Activated B cell treated with CpG ODN at 0.5 μM for 24 hours (primary cell): ENCODE measurements at regions of chr9 and their contacts with region 1.

Region 1: GRCh38 chr9:34376596-34377403 is at the start of gene MYORG:
- DNase-seq: peak; percentile 94
- ATAC-seq: peak; percentile 85
- H3K4me3 Mint-ChIP-seq: peak within 1 kb of the TSS; percentile 93
- H3K27ac Mint-ChIP-seq: peak within 1 kb of the TSS; percentile 75
- H3K4me1 Mint-ChIP-seq: peaks cover 42% of the 10 kb centered on the region
- H3K27me3 Mint-ChIP-seq: peaks cover 2% of the 10 kb centered on the region
- CTCF ChIP-seq: no peak
- total RNA-seq, gene MYORG: 0.24 and 0.27 TPM in 2 replicates

Region 2: DNA sequence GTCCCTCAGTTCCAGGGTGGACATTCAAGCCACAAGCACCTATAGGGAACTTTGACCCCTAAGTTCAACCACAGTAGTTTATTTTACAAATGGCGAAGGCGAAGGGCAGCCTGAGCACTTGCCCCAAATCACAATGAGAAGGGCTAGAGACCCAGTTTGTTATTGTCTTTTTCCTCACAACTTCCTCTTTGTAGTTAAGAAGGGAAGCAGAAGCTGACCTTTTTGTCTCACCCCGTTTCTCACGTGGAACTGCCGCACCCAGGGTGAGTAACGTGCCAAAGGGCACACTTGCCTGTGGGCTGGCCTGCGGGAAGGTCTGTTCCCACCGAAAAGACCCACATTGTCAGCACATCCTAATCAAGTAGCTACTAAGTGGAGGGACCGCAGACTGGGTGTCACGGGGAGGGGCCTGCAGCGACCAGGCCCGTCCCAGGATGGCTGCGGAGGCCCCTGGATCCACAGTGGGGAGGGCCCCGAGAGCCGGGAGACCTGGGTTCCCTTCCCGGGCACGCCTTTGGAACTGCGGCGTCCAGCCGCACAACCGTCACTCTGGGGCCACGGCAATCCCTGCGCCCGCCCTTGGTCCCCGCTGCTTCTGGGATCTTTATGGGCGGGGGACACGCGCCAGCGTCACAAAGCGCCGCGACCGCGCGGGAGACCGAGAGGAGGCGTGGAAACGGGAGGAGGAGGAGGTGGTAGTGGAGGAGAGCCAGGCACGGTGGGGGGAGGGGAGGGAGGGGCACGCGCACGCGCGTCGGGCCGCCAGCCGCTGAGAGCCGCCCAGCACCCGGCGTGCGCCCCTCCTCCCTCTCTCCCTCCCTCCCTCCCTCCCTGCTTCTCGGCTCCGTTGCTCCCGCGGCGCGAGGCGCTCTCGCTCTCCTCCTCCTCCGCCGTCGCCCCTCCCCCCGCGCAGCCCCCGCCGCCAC is 560.2 kb before region 1 on chr9 and contains the start of gene UBE2R2:
- CTCF ChIA-PET with region 1: no interaction called
- POLR2A ChIA-PET with region 1: interaction called, 5 read pairs
- intact Hi-C with region 1: loop called (anchors 1 kb)
- DNase-seq: peak; percentile 79
- ATAC-seq: peak; percentile 72
- H3K4me3 Mint-ChIP-seq: peak within 1 kb of the TSS; percentile 90
- H3K27ac Mint-ChIP-seq: peak within 1 kb of the TSS; percentile 98
- H3K4me1 Mint-ChIP-seq: peaks cover 61% of the 10 kb centered on the region
- H3K27me3 Mint-ChIP-seq: no peaks in the 10 kb centered on the region
- CTCF ChIP-seq: no peak
- total RNA-seq, gene UBE2R2: 28.5 and 28.9 TPM in 2 replicates

Region 3: DNA sequence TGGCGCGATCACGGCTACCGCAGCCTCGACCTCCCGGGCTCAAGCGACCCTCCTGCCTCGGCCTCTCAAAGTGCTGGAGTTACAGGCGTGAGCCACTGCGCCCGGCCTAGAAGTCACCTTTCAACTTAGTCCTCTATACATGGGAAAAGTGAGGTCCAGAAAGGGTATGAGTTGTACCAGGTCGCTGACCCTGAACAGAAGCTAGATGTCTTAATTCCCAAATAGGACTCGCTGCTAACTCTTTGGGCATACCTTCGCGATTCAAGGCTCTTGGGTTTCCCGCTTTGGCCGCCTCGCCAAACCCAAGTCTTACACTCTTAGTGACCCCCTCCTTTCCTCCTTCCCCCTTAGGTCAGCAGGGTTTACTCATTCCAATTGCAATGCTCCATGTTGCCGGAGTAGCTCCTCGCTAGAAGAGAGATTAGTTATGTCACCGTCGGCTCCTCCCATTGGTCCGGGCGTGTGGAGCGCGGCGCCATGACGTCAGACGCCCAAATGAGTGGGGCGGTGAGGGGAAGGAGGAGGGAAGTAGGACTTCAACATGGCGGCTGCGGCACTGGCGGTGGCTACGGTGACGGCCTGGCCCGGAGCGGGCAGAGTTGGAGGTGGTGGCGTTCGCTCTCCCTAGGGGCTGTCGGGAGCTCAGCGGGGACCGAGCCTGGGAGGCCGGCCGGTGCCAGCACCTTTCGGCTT is 198.1 kb before region 1 on chr9 and contains the start of gene UBAP1:
- CTCF ChIA-PET with region 1: no interaction called
- POLR2A ChIA-PET with region 1: no interaction called
- intact Hi-C with region 1: loop called (anchors 1 kb)
- DNase-seq: peak; percentile 88
- ATAC-seq: peak; percentile 97
- H3K4me3 Mint-ChIP-seq: peak within 1 kb of the TSS; percentile 99
- H3K27ac Mint-ChIP-seq: peak within 1 kb of the TSS; percentile 96
- H3K4me1 Mint-ChIP-seq: peaks cover 20% of the 10 kb centered on the region
- H3K27me3 Mint-ChIP-seq: no peaks in the 10 kb centered on the region
- CTCF ChIP-seq: no peak
- total RNA-seq, gene UBAP1: 28.3 and 30.6 TPM in 2 replicates

Region 4: GRCh38 chr9:34458013-34458958 is 81.5 kb after region 1 on chr9 and contains the starts of genes DNAI1 and FAM219A:
- CTCF ChIA-PET with region 1: interaction called, 4 read pairs
- POLR2A ChIA-PET with region 1: no interaction called
- intact Hi-C with region 1: loop called (anchors 1 kb)
- DNase-seq: peak; percentile 99
- ATAC-seq: peak; percentile 92
- H3K4me3 Mint-ChIP-seq: peak within 1 kb of the TSS; percentile 90
- H3K27ac Mint-ChIP-seq: peak within 1 kb of the TSS; percentile 68
- H3K4me1 Mint-ChIP-seq: peaks cover 34% of the 10 kb centered on the region
- H3K27me3 Mint-ChIP-seq: peaks cover 12% of the 10 kb centered on the region
- CTCF ChIP-seq: no peak
- total RNA-seq, gene DNAI1: not detected in 2 replicates
- total RNA-seq, gene FAM219A: 13.5 and 16.9 TPM in 2 replicates

Region 5: DNA sequence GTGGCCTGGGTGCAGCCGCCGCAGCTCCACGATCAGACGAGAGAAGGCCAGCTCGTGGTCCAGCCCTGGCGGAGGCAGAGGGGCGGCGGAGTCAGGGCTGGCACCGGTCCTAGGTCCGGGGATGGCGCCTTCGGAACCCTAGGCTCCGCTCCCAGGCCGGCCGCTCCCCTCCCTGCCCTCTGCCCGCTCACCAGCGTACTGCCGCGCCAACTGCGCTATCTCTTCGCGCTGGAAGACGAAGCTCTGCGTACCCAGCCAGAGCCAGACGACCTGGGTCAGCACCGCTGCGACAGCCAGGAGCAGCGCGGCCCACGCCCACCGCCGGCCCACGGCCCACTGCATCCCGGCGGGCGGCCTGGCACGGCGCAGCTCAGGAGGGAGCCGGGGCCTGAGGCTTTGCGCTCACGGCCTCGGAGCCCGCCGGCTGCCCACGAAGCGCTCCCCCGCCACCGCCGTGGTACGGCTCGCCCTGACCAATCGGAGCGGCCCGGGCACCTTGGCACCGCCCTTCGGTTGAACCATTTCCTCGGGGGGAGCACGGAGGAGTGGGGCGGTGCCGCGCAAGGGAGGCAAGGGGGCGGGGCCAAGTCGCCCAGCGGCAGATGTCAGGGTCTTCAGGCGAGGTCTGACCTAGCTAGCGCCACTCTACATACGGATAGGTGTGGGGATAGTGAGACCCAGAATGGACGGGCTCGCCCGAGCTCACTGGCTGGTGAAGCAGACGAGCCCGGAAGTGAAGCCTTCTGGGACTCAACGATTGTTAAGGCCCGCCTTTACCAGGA is 260.7 kb after region 1 on chr9 and contains the start of gene SIGMAR1:
- CTCF ChIA-PET with region 1: interaction called, 5 read pairs
- POLR2A ChIA-PET with region 1: interaction called, 5 read pairs
- intact Hi-C with region 1: loop called (anchors 1 kb)
- DNase-seq: peak; percentile 93
- ATAC-seq: peak; percentile 95
- H3K4me3 Mint-ChIP-seq: peak within 1 kb of the TSS; percentile 87
- H3K27ac Mint-ChIP-seq: peak within 1 kb of the TSS; percentile 78
- H3K4me1 Mint-ChIP-seq: peaks cover 29% of the 10 kb centered on the region
- H3K27me3 Mint-ChIP-seq: no peaks in the 10 kb centered on the region
- CTCF ChIP-seq: no peak
- total RNA-seq, gene SIGMAR1: 27.2 TPM in 2 replicates

Region 6: GRCh38 chr9:34777666-34778065 is 400.9 kb after region 1 on chr9:
- CTCF ChIA-PET with region 1: no interaction called
- POLR2A ChIA-PET with region 1: no interaction called
- intact Hi-C with region 1: no loop called
- DNase-seq: no peak
- ATAC-seq: no peak
- H3K4me3 Mint-ChIP-seq: no peak overlapping the region
- H3K27ac Mint-ChIP-seq: no peak overlapping the region
- H3K4me1 Mint-ChIP-seq: no peaks in the 10 kb centered on the region
- H3K27me3 Mint-ChIP-seq: peaks cover 36% of the 10 kb centered on the region
- CTCF ChIP-seq: no peak